Mammary epithelial cell (primary cell): ENCODE measurements at regions of chr11 and their contacts with region 1.

Region 1: GRCh38 chr11:29272019-29272654 is 744.7 kb downstream of the KCNA4 start:
- DNase-seq: peak; percentile 51
- H3K4me3 ChIP-seq: no peak overlapping the region
- H3K27ac ChIP-seq: no peak overlapping the region
- H3K4me1 ChIP-seq: peaks cover 8% of the 10 kb centered on the region
- H3K27me3 ChIP-seq: no peaks in the 10 kb centered on the region
- CTCF ChIP-seq: peak; percentile 56 to 72

Region 2: DNA sequence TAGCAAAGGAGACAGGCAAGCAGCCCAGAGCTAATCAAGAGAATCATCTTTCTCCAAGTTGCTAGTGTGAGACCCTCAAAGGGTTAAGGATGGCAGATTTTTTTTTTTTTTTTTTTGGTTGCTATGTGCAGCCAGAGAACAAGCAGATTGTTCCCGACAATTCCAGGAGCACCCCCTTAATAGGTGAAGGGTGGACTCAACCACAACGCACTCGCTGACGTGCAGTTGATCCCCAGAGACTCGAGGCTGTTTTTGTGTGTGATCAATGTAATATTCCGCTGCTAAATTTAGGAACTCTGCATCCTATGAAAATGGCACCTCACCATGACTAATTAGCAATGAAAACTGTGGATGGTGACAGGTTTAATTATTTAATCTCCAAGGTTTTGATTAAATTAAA is 44.3 kb before region 1 on chr11:
- CTCF ChIA-PET with region 1: no interaction called
- dilution Hi-C with region 1: no loop called
- in situ Hi-C with region 1: no loop called
- intact Hi-C with region 1: no loop called
- DNase-seq: no peak
- H3K4me3 ChIP-seq: no peak overlapping the region
- H3K27ac ChIP-seq: no peak overlapping the region
- H3K4me1 ChIP-seq: no peaks in the 10 kb centered on the region
- H3K27me3 ChIP-seq: no peaks in the 10 kb centered on the region
- CTCF ChIP-seq: no peak

Region 3: DNA sequence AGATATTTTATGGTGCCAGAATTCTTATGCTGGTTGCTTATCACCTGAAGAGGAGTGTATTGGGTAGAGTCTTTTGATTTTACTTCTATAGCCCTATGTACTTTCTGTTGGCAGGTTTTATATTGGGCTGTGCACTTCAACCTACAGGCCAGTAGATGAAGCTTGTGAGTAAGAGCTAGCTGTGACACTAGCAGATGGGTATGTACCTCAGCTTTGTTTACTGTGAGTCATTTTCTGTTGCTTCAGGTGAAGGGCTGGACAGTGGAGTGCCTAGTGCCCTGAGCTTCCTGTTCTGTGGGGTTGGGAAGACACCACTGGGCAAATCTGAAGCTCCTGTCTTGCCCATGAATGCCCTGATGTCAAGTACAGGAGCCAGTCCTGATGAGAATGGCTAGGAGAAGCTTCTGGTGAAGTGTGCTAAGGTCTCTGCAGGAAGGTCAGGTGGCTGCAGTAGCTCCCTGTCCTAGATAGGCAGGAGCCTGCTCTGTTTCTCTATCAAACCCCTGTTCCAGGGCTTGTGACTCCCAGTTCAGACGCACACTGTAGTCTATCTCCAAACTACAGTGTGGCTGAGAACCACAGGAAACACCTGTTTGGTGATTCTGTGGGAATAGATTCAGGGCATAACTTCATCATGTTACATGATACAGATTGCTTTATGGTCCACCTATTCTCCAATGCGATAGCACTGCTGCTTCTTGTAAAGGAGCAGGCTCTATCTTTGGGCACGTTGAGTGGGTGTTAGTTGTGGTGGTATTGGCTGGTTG is 11.0 kb before region 1 on chr11:
- CTCF ChIA-PET with region 1: no interaction called
- dilution Hi-C with region 1: no loop called
- in situ Hi-C with region 1: no loop called
- intact Hi-C with region 1: no loop called
- DNase-seq: peak; percentile 90
- H3K4me3 ChIP-seq: no peak overlapping the region
- H3K27ac ChIP-seq: peak overlapping the region; percentile 5
- H3K4me1 ChIP-seq: peaks cover 15% of the 10 kb centered on the region
- H3K27me3 ChIP-seq: no peaks in the 10 kb centered on the region
- CTCF ChIP-seq: peak; percentile 47 to 70

Region 4: GRCh38 chr11:29328961-29329441 is 56.9 kb after region 1 on chr11:
- CTCF ChIA-PET with region 1: no interaction called
- dilution Hi-C with region 1: no loop called
- in situ Hi-C with region 1: loop called in 1 of 2 experiments (anchors 5 kb)
- intact Hi-C with region 1: loop called (anchors 1 kb)
- DNase-seq: peak; percentile 92
- H3K4me3 ChIP-seq: no peak overlapping the region
- H3K27ac ChIP-seq: peak overlapping the region; percentile 45
- H3K4me1 ChIP-seq: peaks cover 22% of the 10 kb centered on the region
- H3K27me3 ChIP-seq: no peaks in the 10 kb centered on the region
- CTCF ChIP-seq: peak; percentile 78 to 82